ENCODE measurements at regions of chr2 and their contacts with region 1.

Region 1: GRCh38 chr2:218979846-218980734 is 4.9 kb downstream of the FEV start:
- DNase-seq: peak; percentile 94
- H3K4me3 Mint-ChIP-seq: peak overlapping the region; percentile 64
- H3K27ac Mint-ChIP-seq: peak overlapping the region; percentile 50
- H3K4me1 Mint-ChIP-seq: peaks cover 10% of the 10 kb centered on the region
- H3K27me3 Mint-ChIP-seq: peaks cover 74% of the 10 kb centered on the region

Region 2: GRCh38 chr2:218852911-218853667 is 127.0 kb before region 1 on chr2:
- intact Hi-C with region 1: loop called (anchors 5 kb)
- DNase-seq: peak; percentile 86
- H3K4me3 Mint-ChIP-seq: no peak overlapping the region
- H3K27ac Mint-ChIP-seq: no peak overlapping the region
- H3K4me1 Mint-ChIP-seq: peaks cover 4% of the 10 kb centered on the region
- H3K27me3 Mint-ChIP-seq: peaks cover 60% of the 10 kb centered on the region

Region 3: GRCh38 chr2:218870984-218871344 is 109.1 kb before region 1 on chr2:
- intact Hi-C with region 1: loop called (anchors 5 kb)
- DNase-seq: no peak
- H3K4me3 Mint-ChIP-seq: no peak overlapping the region
- H3K27ac Mint-ChIP-seq: no peak overlapping the region
- H3K4me1 Mint-ChIP-seq: peaks cover 9% of the 10 kb centered on the region
- H3K27me3 Mint-ChIP-seq: peaks cover 81% of the 10 kb centered on the region

Region 4: GRCh38 chr2:218962859-218963492 is 17.1 kb before region 1 on chr2:
- intact Hi-C with region 1: loop called (anchors 2 kb)
- DNase-seq: peak; percentile 90
- H3K4me3 Mint-ChIP-seq: no peak overlapping the region
- H3K27ac Mint-ChIP-seq: no peak overlapping the region
- H3K4me1 Mint-ChIP-seq: peaks cover 8% of the 10 kb centered on the region
- H3K27me3 Mint-ChIP-seq: peaks cover 62% of the 10 kb centered on the region

Region 5: GRCh38 chr2:218995972-218996711 is 16.1 kb after region 1 on chr2:
- intact Hi-C with region 1: loop called (anchors 1 kb)
- DNase-seq: peak; percentile 93
- H3K4me3 Mint-ChIP-seq: peak overlapping the region; percentile 34
- H3K27ac Mint-ChIP-seq: no peak overlapping the region
- H3K4me1 Mint-ChIP-seq: peaks cover 3% of the 10 kb centered on the region
- H3K27me3 Mint-ChIP-seq: peaks cover 81% of the 10 kb centered on the region

Region 6: DNA sequence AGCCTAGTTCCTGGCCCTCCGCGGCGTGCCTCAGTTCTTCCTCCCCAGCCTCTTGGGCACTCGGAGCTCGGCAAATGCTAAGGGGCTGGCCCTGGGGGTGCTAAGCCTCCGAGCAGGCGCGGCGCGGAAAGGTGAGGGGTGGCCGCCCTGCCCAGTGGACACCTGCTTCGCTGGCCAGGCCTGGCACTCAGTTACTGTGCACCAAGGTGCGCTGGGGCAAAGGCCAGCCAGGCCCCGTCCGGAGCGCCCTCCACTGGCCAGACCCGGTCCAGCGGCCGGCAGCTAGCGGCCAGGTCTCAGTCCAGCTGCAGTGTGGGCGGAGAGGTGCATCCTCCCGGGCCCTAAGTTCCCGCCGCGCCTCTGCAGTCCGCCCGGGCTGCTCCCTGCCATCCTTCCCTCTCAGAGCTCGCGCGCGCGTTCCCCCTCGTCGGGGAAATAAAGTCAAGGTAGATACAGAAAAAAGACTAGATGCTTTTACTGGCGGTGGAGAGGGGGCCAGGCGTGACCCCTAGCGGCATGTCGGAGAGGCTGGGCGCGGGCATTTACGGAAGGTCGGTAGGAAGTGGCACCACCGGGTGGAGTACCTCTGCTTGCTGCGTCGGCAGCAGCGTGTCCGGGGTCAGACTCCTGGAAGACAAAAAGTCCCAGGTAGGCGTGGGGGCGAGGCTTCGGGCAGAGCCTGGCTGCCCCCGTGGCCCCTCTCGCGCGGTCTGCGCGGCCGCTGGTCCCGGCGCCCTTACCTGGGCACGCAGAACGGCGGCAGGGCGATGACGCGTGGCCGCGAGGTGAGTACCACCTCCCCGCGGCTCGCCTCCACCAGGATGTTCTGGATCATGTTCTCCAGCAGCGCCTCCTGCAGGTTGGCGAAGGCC is 22.5 kb after region 1 on chr2:
- intact Hi-C with region 1: loop called (anchors 2 kb)
- DNase-seq: peak; percentile 81
- H3K4me3 Mint-ChIP-seq: peak overlapping the region; percentile 32
- H3K27ac Mint-ChIP-seq: no peak overlapping the region
- H3K4me1 Mint-ChIP-seq: peaks cover 2% of the 10 kb centered on the region
- H3K27me3 Mint-ChIP-seq: peaks cover 72% of the 10 kb centered on the region

Region 7: GRCh38 chr2:219017201-219017931 is 37.3 kb after region 1 on chr2:
- intact Hi-C with region 1: no loop called
- DNase-seq: no peak
- H3K4me3 Mint-ChIP-seq: no peak overlapping the region
- H3K27ac Mint-ChIP-seq: no peak overlapping the region
- H3K4me1 Mint-ChIP-seq: no peaks in the 10 kb centered on the region
- H3K27me3 Mint-ChIP-seq: no peaks in the 10 kb centered on the region

Region 8: DNA sequence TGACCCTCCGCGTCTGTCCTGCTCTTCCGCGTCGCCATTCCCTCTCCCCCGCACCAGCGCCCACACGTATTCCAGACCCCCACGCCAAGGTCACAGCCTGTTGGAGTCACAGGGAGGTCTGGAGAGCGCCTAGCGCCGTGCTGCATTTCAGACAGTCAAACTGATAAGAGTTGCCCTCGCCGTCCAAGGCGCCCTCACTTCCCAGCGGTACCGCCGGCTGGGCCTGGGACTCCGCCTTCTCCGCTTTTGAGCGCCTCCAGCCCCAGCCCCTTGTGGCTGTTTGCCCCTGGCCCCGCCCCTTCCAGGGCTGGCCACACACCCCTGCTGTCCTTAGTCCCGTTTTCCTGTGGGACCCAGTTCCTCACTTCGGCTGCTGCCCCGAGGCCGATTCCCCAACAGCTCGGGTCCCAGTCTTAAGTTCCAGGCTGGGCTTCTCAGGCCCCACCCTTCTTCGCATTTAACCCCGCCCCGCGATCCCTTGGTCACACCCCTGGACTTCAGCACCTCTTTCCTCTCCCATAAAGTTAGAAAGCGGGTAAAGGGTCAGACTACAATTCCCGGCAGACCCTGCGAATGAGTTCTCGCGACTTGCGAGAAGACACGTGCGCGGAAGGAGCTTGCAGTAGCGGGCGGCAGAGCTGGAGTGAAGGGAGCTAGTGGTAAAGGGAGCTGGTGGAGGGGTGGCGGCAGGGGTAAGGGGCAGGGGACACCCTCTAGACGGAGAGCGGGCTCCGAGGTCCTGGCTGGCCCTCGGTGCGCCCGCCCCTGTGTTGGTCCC is 518.4 kb after region 1 on chr2 and contains the start of gene GMPPA:
- intact Hi-C with region 1: loop called (anchors 10 kb)
- DNase-seq: peak; percentile 99
- H3K4me3 Mint-ChIP-seq: peak within 1 kb of the TSS; percentile 97
- H3K27ac Mint-ChIP-seq: peak within 1 kb of the TSS; percentile 83
- H3K4me1 Mint-ChIP-seq: peaks cover 26% of the 10 kb centered on the region
- H3K27me3 Mint-ChIP-seq: peaks cover 39% of the 10 kb centered on the region
- total RNA-seq, gene GMPPA: 45.5 and 46.0 TPM in 2 replicates